ENCODE measurements at regions of chr14 and their contacts with region 1.

Region 1: DNA sequence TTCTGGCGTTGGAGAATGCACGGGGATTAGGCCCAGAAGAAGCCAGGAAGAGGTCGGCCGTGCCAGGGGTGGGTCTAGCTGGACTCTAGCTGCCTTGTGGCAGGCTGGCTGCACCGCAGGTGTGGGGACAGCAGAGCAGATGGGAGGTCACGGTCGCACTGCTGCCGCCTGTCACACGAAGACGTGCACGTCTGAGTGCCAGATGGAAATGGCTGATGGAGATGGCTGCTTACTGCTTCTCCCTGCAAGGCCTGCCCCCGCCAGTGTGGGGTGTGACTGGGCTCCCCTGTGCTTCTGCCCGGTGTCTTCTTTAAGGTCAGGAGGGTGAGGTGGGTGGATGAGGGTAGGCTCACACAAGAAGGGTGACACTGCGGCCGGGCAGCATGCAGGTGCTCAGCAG is 79.0 kb downstream of the MOK start:
- DNase-seq: no peak
- ATAC-seq: no peak
- H3K4me3 ChIP-seq: no peak overlapping the region
- H3K27ac ChIP-seq: no peak overlapping the region
- H3K4me1 ChIP-seq: peaks cover 0 to 10% (median 0%) of the 10 kb centered on the region in 12 donors
- H3K27me3 ChIP-seq: no peaks in the 10 kb centered on the region
- CTCF ChIP-seq: no peak
- POLR2A ChIP-seq: no peak

Region 2: GRCh38 chr14:102206918-102207317 is 19.0 kb before region 1 on chr14:
- intact Hi-C with region 1: loop called in 1 of 10 experiments (anchors 1 kb)
- DNase-seq: no peak
- ATAC-seq: peak in 2 of 4 donors; percentile 20 to 25
- H3K4me3 ChIP-seq: no peak overlapping the region
- H3K27ac ChIP-seq: no peak overlapping the region
- H3K4me1 ChIP-seq: peaks cover 0 to 15% (median 0%) of the 10 kb centered on the region in 12 donors
- H3K27me3 ChIP-seq: no peaks in the 10 kb centered on the region
- CTCF ChIP-seq: no peak
- POLR2A ChIP-seq: no peak